ENCODE measurements at regions of chr9 and their contacts with region 1.

Region 1: DNA sequence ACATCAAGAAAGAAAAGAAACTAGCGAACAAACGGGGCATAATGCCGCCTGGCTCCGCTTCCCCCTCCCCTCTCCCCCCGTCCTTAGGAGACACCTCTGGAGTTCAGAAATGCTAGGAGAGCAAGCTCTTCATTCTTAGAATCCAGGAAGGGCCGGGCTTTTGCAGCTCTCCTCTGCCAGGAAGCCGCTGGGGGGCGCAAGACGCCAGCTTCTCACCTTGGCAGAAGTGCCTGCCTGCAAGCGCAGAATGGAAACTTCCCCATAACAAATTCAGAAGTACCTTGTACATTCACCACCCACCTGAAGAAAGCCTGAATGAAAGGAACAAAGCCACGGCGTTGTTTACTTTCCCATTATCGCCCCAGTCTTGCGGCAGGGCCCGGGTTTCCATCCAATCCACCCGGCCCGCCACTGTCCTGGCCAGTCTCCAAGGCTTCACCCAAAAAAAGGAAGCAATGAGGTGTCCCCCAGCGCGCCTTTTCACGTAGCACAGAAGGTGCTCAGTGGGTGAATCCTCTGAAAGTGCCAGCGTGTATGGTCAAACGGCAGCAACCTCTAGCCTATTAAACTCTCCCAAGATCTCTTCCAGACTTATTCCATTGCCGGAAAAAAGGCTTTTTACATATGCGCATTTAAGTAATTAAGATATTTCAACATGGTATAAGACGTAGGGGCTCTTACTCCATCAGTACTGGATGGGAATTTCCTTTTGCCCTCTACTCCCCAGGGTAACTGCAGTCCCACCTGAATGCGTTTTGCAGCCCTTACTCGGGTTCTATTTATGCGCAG is 1.6 kb upstream of the GADD45G start:
- DNase-seq: peak; percentile 74 to 88 (median 85)
- ATAC-seq: peak; percentile 55
- H3K4me3 ChIP-seq: peak overlapping the region; percentile 72
- H3K4me3 Mint-ChIP-seq: peak overlapping the region; percentile 79 to 92 (median 88)
- H3K27ac ChIP-seq: no peak overlapping the region
- H3K27ac Mint-ChIP-seq: peak overlapping the region in 7 of 9 donors; percentile 12 to 88 (median 62)
- H3K4me1 ChIP-seq: peaks cover 12 to 23% of the 10 kb centered on the region in 2 donors
- H3K4me1 Mint-ChIP-seq: peaks cover 0 to 34% (median 23%) of the 10 kb centered on the region in 7 donors
- H3K27me3 ChIP-seq: no peaks in the 10 kb centered on the region
- H3K27me3 Mint-ChIP-seq: peaks cover 0 to 21% (median 0%) of the 10 kb centered on the region in 5 donors

Region 2: DNA sequence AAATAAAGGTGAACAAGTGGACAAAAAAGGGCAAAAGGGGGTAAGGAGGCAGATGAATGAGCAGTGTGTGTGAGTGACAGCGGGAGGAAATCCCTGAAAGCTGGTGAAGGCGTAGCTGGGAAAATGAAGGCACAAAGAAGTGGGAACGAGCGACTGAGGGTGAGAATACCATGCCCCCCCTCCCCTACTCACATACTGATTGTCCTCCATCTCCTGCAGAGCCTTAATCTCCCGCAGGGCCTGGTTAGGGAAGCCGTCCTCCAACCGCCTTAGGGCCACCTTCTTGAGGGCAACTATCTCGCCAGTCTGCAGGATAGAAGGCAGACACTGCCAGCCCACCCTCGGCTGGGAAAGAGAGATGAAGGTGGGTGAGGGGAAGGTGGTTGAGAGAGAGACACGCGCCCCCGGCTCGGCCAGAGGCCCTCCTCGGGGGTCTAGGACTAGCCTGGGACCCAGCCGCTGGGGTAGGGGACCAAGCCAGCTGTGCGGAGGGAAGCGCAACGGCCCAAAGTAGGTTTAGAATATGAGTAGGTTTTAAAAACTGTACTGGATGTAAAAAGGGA is 1629.4 kb before region 1 on chr9:
- CTCF ChIA-PET with region 1: no interaction called
- POLR2A ChIA-PET with region 1: no interaction called
- intact Hi-C with region 1: loop called in 1 of 2 experiments (anchors 5 kb)
- DNase-seq: peak in 1 of 9 donors; percentile 17
- ATAC-seq: no peak
- H3K4me3 ChIP-seq: peak overlapping the region; percentile 96
- H3K4me3 Mint-ChIP-seq: peak overlapping the region; percentile 87 to 99 (median 95)
- H3K27ac ChIP-seq: peak overlapping the region; percentile 77
- H3K27ac Mint-ChIP-seq: peak overlapping the region; percentile 95 to 99 (median 97)
- H3K4me1 ChIP-seq: peaks cover 0 to 10% of the 10 kb centered on the region in 2 donors
- H3K4me1 Mint-ChIP-seq: peaks cover 13 to 36% (median 32%) of the 10 kb centered on the region in 7 donors
- H3K27me3 ChIP-seq: no peaks in the 10 kb centered on the region
- H3K27me3 Mint-ChIP-seq: peaks cover 0 to 3% (median 0%) of the 10 kb centered on the region in 5 donors

Region 3: GRCh38 chr9:89701221-89701798 is 98.1 kb after region 1 on chr9:
- CTCF ChIA-PET with region 1: no interaction called
- POLR2A ChIA-PET with region 1: no interaction called
- intact Hi-C with region 1: loop called (anchors 1 to 2 kb)
- DNase-seq: peak; percentile 23 to 83 (median 50)
- ATAC-seq: peak; percentile 96
- H3K4me3 ChIP-seq: no peak overlapping the region
- H3K4me3 Mint-ChIP-seq: peak overlapping the region; percentile 53 to 89 (median 68)
- H3K27ac ChIP-seq: no peak overlapping the region
- H3K27ac Mint-ChIP-seq: peak overlapping the region; percentile 61 to 91 (median 65)
- H3K4me1 ChIP-seq: peaks cover 0 to 14% of the 10 kb centered on the region in 2 donors
- H3K4me1 Mint-ChIP-seq: peaks cover 1 to 85% (median 27%) of the 10 kb centered on the region in 7 donors
- H3K27me3 ChIP-seq: no peaks in the 10 kb centered on the region
- H3K27me3 Mint-ChIP-seq: no peaks in the 10 kb centered on the region

Region 4: DNA sequence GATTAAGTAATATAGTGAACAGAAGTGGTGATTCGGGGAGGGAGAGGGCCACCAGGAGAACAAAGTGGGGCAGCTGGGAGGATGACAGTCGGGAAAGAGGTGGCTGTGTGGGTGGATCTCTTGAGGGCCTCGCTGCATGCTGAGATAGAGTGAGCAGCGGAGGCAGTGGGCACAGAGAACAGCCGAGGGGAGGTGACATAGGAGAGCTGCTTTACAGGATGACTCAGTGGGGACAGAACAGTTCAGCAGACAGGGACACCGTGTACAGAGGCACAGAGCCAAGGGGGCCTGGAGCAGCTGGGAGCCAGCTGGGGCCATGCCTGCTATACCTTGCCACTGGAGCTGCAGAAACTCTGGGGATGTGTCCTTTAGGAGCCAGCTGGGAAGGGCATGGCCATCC is 275.5 kb after region 1 on chr9:
- CTCF ChIA-PET with region 1: interaction called, 3 read pairs
- POLR2A ChIA-PET with region 1: no interaction called
- intact Hi-C with region 1: loop called (anchors 1 kb)
- DNase-seq: peak in 1 of 9 donors; percentile 13
- ATAC-seq: no peak
- H3K4me3 ChIP-seq: no peak overlapping the region
- H3K4me3 Mint-ChIP-seq: no peak overlapping the region
- H3K27ac ChIP-seq: no peak overlapping the region
- H3K27ac Mint-ChIP-seq: peak overlapping the region in 1 of 9 donors; percentile 2
- H3K4me1 ChIP-seq: no peaks in the 10 kb centered on the region
- H3K4me1 Mint-ChIP-seq: peaks cover 0 to 2% (median 0%) of the 10 kb centered on the region in 7 donors
- H3K27me3 ChIP-seq: no peaks in the 10 kb centered on the region
- H3K27me3 Mint-ChIP-seq: no peaks in the 10 kb centered on the region

Region 5: DNA sequence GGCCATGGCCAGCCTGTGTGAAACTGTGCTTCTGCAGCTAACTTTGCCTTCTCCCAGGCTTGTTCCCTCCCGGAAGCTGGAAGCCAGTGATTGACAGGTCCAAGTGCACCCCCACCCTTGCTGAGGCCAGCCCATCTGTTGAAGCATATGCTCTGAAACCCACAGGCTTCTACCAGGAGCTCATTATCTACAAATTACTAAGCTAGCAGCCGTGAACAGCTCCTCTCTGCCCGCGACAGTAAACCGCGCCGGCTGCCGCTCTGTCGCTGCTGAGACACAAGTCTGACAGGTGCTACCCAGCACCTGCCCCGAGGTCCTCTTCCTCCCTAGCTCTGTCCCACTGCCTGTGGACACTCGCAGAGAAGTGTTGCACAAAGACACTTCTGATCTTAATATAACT is 492.5 kb after region 1 on chr9:
- CTCF ChIA-PET with region 1: interaction called, 17 read pairs
- POLR2A ChIA-PET with region 1: interaction called, 3 read pairs
- intact Hi-C with region 1: no loop called
- DNase-seq: no peak
- ATAC-seq: no peak
- H3K4me3 ChIP-seq: no peak overlapping the region
- H3K4me3 Mint-ChIP-seq: peak overlapping the region in 1 of 10 donors; percentile 3
- H3K27ac ChIP-seq: no peak overlapping the region
- H3K27ac Mint-ChIP-seq: no peak overlapping the region
- H3K4me1 ChIP-seq: peaks cover 6 to 19% of the 10 kb centered on the region in 2 donors
- H3K4me1 Mint-ChIP-seq: peaks cover 13 to 28% (median 24%) of the 10 kb centered on the region in 7 donors
- H3K27me3 ChIP-seq: no peaks in the 10 kb centered on the region
- H3K27me3 Mint-ChIP-seq: peaks cover 0 to 35% (median 5%) of the 10 kb centered on the region in 5 donors

Region 6: DNA sequence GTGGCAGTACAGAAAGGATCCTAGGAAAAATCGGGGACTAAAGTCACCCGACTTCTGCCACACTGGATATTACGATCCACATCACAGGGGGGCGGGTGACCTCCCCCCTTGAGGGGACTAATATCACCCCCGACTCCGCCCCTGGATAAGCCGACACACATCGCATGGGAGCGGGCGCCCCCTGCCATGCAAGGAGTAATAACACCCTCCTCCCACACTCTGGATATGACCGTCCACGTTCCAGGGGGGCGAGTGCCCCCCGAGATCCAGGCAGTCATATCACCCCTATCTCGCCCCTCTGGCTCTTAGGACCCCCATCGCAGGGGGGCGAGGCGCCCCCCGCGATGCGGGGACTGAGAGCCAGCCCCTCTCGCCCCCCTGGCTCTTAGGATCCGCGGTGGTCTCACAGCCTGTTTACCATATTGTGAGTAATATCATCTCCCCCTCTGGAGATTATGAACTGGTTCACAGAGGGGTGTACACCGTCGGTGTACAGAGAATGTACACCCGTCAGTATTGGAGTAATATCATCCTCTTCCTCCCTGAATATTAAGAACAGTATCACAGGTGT is 616.5 kb after region 1 on chr9:
- CTCF ChIA-PET with region 1: no interaction called
- POLR2A ChIA-PET with region 1: no interaction called
- intact Hi-C with region 1: loop called in 1 of 2 experiments (anchors 2 kb)
- DNase-seq: peak in 5 of 9 donors; percentile 14 to 33 (median 19)
- ATAC-seq: peak; percentile 61
- H3K4me3 ChIP-seq: no peak overlapping the region
- H3K4me3 Mint-ChIP-seq: no peak overlapping the region
- H3K27ac ChIP-seq: no peak overlapping the region
- H3K27ac Mint-ChIP-seq: no peak overlapping the region
- H3K4me1 ChIP-seq: no peaks in the 10 kb centered on the region
- H3K4me1 Mint-ChIP-seq: peaks cover 0 to 8% (median 3%) of the 10 kb centered on the region in 7 donors
- H3K27me3 ChIP-seq: no peaks in the 10 kb centered on the region
- H3K27me3 Mint-ChIP-seq: peaks cover 0 to 31% (median 12%) of the 10 kb centered on the region in 5 donors

Region 7: DNA sequence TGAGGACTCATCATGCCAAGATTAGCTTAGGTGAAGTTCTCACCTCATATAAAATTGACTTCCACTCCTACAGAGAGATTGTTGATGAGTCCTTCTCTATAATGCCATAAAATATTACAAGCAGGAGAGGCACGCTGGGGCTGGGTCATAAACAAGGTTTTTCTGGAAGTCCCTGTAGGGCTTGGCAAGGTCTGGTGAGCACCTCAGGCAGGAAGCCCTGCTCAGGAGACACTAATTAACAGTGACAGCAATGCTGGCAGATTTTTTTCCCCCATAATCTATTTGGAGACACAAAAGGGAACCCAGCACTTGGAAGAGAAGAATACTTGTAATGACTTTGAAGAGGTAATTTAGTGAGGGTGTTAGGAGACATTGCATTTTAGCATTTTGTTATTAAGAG is 920.8 kb after region 1 on chr9:
- CTCF ChIA-PET with region 1: no interaction called
- POLR2A ChIA-PET with region 1: no interaction called
- intact Hi-C with region 1: no loop called
- DNase-seq: no peak
- ATAC-seq: no peak
- H3K4me3 ChIP-seq: no peak overlapping the region
- H3K4me3 Mint-ChIP-seq: no peak overlapping the region
- H3K27ac ChIP-seq: no peak overlapping the region
- H3K27ac Mint-ChIP-seq: no peak overlapping the region
- H3K4me1 ChIP-seq: no peaks in the 10 kb centered on the region
- H3K4me1 Mint-ChIP-seq: no peaks in the 10 kb centered on the region
- H3K27me3 ChIP-seq: no peaks in the 10 kb centered on the region
- H3K27me3 Mint-ChIP-seq: peaks cover 16 to 41% (median 31%) of the 10 kb centered on the region in 5 donors